ENCODE measurements at regions of chr19 and their contacts with region 1.

Region 1: DNA sequence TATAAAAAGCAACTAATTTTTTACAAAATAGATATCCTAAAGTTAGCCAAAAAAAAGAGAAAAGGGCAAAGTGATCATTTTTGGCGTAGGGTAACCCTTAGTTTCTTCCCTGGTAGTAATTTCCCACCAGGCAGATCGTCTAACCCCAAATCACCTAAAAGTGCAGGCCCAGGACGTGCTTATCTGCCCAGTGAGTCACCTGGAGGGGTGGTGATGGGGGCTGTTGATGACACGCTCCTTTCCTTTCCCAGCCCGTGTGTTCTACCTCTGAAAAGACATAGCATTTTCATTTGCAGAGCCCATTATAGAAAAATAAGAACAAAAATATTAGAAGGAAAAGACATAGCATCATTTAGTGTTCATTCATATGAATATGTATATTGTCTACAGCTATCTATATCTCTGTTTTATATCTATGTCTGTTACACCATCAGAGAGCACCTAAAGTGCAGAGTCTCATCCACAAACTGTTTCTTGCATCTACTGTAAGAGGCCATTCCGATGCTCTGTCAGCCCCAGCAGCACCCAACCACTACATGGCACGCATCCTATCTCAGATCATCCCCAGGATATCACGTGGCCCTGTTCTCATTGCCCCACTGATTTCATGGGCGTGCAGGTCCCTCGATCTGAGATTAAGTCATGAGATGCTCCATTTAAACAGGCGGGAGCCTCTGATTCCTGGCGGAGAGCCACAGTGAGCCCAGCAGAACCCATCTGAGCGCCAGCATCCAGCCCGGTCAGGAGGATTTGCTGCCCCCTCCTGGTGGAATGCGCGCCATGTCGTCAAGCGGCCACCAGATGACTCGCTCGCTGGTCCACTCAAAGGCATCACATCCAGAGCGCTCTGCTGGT is 8.5 kb upstream of the LILRB3 start:
- DNase-seq: no peak
- ATAC-seq: peak; percentile 100
- H3K4me3 ChIP-seq: no peak overlapping the region
- H3K27ac ChIP-seq: no peak overlapping the region
- H3K4me1 ChIP-seq: no peaks in the 10 kb centered on the region
- H3K27me3 ChIP-seq: no peaks in the 10 kb centered on the region
- CTCF ChIP-seq: peak; percentile 99; a peak in 5 of 6 replicates
- EP300 ChIP-seq: no peak
- POLR2A ChIP-seq: no peak
- RAD21 ChIP-seq: peak; percentile 91

Region 2: GRCh38 chr19:53195265-53195903 is 1035.9 kb before region 1 on chr19:
- CTCF ChIA-PET with region 1: no interaction called
- POLR2A ChIA-PET with region 1: no interaction called
- RAD21 ChIA-PET with region 1: no interaction called
- SMC1A ChIA-PET with region 1: no interaction called
- in situ Hi-C with region 1: loop called (anchors 10 kb)
- intact Hi-C with region 1: no loop called
- DNase-seq: peak; percentile 27
- ATAC-seq: peak; percentile 51; the same call in 2 of the 3 replicates
- H3K4me3 ChIP-seq: no peak overlapping the region
- H3K27ac ChIP-seq: no peak overlapping the region
- H3K4me1 ChIP-seq: no peaks in the 10 kb centered on the region
- H3K27me3 ChIP-seq: no peaks in the 10 kb centered on the region
- CTCF ChIP-seq: peak; percentile 77 to 92 (median 82)
- EP300 ChIP-seq: no peak
- POLR2A ChIP-seq: no peak
- RAD21 ChIP-seq: peak; percentile 91

Region 3: DNA sequence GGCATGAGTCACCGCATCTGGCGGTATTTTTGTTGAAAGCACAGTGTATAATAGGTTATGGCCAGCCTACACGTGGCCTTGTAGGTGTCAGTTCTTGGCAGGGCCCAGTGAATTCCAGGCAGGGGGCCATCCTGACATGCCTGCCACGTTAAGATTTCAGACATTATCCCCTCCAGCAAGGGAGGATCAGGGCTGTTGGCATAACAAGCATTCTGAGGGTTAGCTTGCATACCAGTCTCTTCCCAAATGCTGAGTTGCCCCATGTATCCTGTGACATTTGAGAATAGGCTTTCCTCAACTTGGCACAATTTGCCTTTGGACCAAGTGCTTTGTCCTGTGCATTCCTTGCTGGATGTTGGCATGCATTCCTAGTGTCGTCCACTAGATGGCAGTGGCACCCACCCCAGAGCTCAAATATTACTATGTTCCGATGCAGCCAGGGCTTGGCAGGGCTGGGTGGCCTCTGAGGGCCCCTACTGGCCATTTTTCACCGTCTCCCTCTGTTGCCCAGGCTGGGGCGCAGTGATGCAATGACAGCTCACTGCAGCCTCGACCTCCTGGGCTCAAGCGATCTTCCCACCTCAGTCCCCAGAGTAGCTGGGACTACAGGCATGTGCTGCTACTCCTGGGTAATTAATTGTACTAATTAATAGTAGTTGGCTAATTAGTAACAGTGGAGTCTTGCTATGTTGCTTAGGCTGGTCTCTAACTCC is 438.4 kb before region 1 on chr19:
- CTCF ChIA-PET with region 1: no interaction called
- POLR2A ChIA-PET with region 1: no interaction called
- RAD21 ChIA-PET with region 1: no interaction called
- SMC1A ChIA-PET with region 1: no interaction called
- in situ Hi-C with region 1: loop called (anchors 10 kb)
- intact Hi-C with region 1: no loop called
- DNase-seq: peak; percentile 7
- ATAC-seq: peak; percentile 87
- H3K4me3 ChIP-seq: no peak overlapping the region
- H3K27ac ChIP-seq: no peak overlapping the region
- H3K4me1 ChIP-seq: no peaks in the 10 kb centered on the region
- H3K27me3 ChIP-seq: no peaks in the 10 kb centered on the region
- CTCF ChIP-seq: peak; percentile 74 to 81 (median 76)
- EP300 ChIP-seq: no peak
- POLR2A ChIP-seq: no peak
- RAD21 ChIP-seq: peak; percentile 61

Region 4: DNA sequence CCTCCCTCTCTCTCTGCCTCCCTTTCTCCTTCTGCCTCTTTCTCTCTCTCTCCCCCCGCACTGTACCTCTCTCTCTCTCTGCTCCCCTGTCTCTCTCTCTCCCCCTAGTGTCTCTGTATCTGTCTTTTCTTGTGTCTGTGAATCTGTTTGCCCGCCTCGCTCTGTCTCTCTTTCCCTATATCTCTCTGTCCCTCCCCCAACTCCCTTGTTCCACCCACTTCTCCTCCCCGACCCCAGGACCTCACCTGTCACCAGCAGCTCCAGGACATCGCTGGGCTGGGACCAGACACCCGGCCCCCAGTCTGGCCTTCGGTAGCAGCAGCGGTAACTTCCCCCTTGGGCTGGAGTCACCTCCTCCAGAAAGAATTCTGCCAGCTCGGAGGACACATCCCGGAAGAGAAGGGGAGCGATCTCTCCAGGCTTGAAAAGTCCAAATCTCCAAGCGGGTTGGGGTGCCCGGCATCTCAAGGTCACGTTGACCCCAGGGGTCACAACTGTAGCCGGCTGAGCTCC is 134.6 kb before region 1 on chr19:
- CTCF ChIA-PET with region 1: no interaction called
- POLR2A ChIA-PET with region 1: no interaction called
- RAD21 ChIA-PET with region 1: no interaction called
- SMC1A ChIA-PET with region 1: no interaction called
- in situ Hi-C with region 1: no loop called
- intact Hi-C with region 1: no loop called
- DNase-seq: no peak
- ATAC-seq: peak; percentile 38; the same call in 1 of the 3 replicates
- H3K4me3 ChIP-seq: no peak overlapping the region
- H3K27ac ChIP-seq: no peak overlapping the region
- H3K4me1 ChIP-seq: no peaks in the 10 kb centered on the region
- H3K27me3 ChIP-seq: no peaks in the 10 kb centered on the region; a peak in 2 of 4 replicates
- CTCF ChIP-seq: peak; percentile 4 to 28 (median 22); a peak in 1 of 6 replicates
- EP300 ChIP-seq: no peak
- POLR2A ChIP-seq: no peak
- RAD21 ChIP-seq: peak; percentile 31

Region 5: GRCh38 chr19:54168174-54168917 is 63.0 kb before region 1 on chr19:
- CTCF ChIA-PET with region 1: interaction called, 9 read pairs
- POLR2A ChIA-PET with region 1: no interaction called
- RAD21 ChIA-PET with region 1: interaction called, 5 read pairs
- SMC1A ChIA-PET with region 1: no interaction called
- in situ Hi-C with region 1: no loop called
- intact Hi-C with region 1: loop called (anchors 1 kb)
- DNase-seq: no peak
- ATAC-seq: peak; percentile 98
- H3K4me3 ChIP-seq: no peak overlapping the region
- H3K27ac ChIP-seq: no peak overlapping the region
- H3K4me1 ChIP-seq: no peaks in the 10 kb centered on the region
- H3K27me3 ChIP-seq: no peaks in the 10 kb centered on the region
- CTCF ChIP-seq: peak; percentile 72 to 91 (median 81)
- EP300 ChIP-seq: no peak
- POLR2A ChIP-seq: no peak
- RAD21 ChIP-seq: peak; percentile 66

Region 6: DNA sequence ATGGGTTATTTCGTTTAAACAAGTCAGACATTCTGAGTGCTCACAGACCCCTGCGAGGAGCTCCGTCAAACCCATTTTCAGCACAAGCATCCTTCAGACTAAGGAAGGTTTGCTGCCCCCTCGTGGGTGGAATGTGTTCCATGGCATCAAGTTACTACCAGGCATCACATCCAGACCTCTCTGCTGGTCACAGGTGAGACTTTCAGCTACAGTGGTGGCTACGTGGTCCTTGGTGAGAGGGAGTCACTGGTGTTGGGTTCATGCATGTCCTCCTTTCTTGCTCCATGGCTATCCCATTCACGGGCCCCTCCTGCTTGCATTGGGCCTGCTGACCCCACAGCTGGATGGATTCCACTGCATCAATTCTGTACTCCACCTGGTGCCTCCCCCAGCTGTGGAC is 34.8 kb after region 1 on chr19:
- CTCF ChIA-PET with region 1: interaction called, 10 read pairs
- POLR2A ChIA-PET with region 1: no interaction called
- RAD21 ChIA-PET with region 1: interaction called, 3 read pairs
- SMC1A ChIA-PET with region 1: interaction called, 6 read pairs
- in situ Hi-C with region 1: no loop called
- intact Hi-C with region 1: no loop called
- DNase-seq: peak; percentile 19
- ATAC-seq: peak; percentile 90
- H3K4me3 ChIP-seq: no peak overlapping the region
- H3K27ac ChIP-seq: no peak overlapping the region
- H3K4me1 ChIP-seq: no peaks in the 10 kb centered on the region
- H3K27me3 ChIP-seq: peaks cover 0 to 3% of the 10 kb centered on the region in 2 experiments; a peak in 1 of 4 replicates
- CTCF ChIP-seq: peak; percentile 75 to 87 (median 77)
- EP300 ChIP-seq: no peak
- POLR2A ChIP-seq: no peak
- RAD21 ChIP-seq: peak; percentile 58; the same call in 1 of the 2 replicates

Region 7: GRCh38 chr19:54282686-54283470 is 51.6 kb after region 1 on chr19:
- CTCF ChIA-PET with region 1: no interaction called
- POLR2A ChIA-PET with region 1: no interaction called
- RAD21 ChIA-PET with region 1: no interaction called
- SMC1A ChIA-PET with region 1: no interaction called
- in situ Hi-C with region 1: no loop called
- intact Hi-C with region 1: no loop called
- DNase-seq: no peak
- ATAC-seq: peak; percentile 12; the same call in 2 of the 3 replicates
- H3K4me3 ChIP-seq: no peak overlapping the region
- H3K27ac ChIP-seq: no peak overlapping the region
- H3K4me1 ChIP-seq: no peaks in the 10 kb centered on the region
- H3K27me3 ChIP-seq: peaks cover 0 to 1% of the 10 kb centered on the region in 2 experiments; a peak in 2 of 4 replicates
- CTCF ChIP-seq: no peak
- EP300 ChIP-seq: no peak
- POLR2A ChIP-seq: no peak
- RAD21 ChIP-seq: no peak

Measured in GM12878 (cell line).